MCF 10A (cell line): ENCODE measurements at regions of chr13 and their contacts with region 1.

Region 1: DNA sequence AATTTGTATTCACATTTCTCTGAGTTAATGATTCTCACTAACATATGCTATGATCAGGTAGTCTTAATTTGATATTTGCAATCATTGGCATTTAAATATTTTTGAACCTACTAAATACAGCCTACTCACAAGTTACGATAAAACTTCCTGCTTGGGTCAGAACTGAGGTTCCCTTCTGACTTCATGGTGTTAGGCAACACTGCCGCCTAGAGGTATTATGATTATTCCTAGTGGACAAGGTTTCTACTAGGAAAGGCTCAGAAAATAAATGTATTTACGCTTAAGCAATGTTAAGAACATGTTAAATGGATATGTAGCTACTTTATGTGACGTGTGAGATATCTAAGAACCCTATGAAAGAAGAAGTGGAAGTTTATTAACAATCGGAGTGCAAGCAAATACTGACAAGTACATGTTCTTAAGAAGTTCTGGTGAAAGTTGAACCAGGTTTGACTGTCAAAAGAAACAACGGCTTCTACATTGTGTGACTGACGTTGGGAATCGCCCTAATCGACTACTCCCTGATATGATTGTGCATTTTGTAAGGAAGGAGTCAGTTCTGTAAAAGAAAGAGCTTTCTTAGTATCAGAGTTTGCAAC is 1395.8 kb downstream of the SLITRK5 start:
- DNase-seq: peak; percentile 79
- H3K4me3 Mint-ChIP-seq: no peak overlapping the region
- H3K27ac Mint-ChIP-seq: no peak overlapping the region
- H3K4me1 Mint-ChIP-seq: peaks cover 6% of the 10 kb centered on the region
- H3K27me3 Mint-ChIP-seq: no peaks in the 10 kb centered on the region
- CTCF ChIP-seq: peak; percentile 60

Region 2: DNA sequence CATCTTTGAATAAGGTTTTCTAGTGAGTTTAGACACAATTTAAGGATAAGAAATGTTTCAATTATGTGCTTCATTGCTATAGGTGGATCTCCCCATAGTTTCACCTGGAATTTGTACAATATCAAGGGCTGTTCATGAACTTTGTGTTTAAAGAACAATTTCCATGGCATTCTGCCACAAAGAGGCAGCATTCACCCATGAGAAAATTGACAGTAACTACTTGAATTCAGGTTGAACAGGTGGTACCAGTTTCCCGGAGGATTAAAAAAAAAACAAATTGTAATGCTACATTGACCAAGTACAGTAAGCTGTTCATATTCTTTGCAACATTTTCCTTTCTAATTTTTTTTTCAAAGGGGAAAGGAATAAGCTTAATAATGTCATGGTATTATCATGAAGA is 1386.7 kb before region 1 on chr13:
- CTCF ChIA-PET with region 1: interaction called, 6 read pairs
- POLR2A ChIA-PET with region 1: interaction called, 3 read pairs
- intact Hi-C with region 1: loop called (anchors 1 kb)
- DNase-seq: peak; percentile 63
- H3K4me3 Mint-ChIP-seq: no peak overlapping the region
- H3K27ac Mint-ChIP-seq: no peak overlapping the region
- H3K4me1 Mint-ChIP-seq: peaks cover 15% of the 10 kb centered on the region
- H3K27me3 Mint-ChIP-seq: no peaks in the 10 kb centered on the region
- CTCF ChIP-seq: peak; percentile 32

Region 3: DNA sequence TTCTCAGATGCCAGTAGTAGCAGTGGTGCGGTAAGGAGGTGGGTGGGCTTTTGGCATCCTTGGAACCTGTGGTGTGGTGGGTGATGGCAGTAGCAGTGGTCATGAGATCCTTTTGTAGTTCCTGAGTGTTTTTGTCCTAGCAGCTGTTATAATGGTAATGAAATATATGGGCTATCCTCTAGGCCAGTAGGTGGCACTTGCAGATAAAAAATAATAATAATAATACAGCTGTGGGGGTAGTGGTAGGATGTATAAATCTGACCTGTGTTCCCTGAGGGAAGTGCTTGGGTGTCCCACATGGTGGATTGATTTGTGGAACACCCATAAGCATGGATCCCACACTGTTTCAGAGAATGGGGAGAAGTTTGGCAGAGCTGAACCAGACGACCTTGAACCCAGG is 1061.8 kb before region 1 on chr13:
- CTCF ChIA-PET with region 1: interaction called, 3 read pairs
- POLR2A ChIA-PET with region 1: interaction called, 3 read pairs
- intact Hi-C with region 1: loop called (anchors 1 kb)
- DNase-seq: peak; percentile 3
- H3K4me3 Mint-ChIP-seq: no peak overlapping the region
- H3K27ac Mint-ChIP-seq: no peak overlapping the region
- H3K4me1 Mint-ChIP-seq: no peaks in the 10 kb centered on the region
- H3K27me3 Mint-ChIP-seq: no peaks in the 10 kb centered on the region
- CTCF ChIP-seq: peak; percentile 41

Region 4: GRCh38 chr13:88883741-88884140 is 183.2 kb before region 1 on chr13:
- CTCF ChIA-PET with region 1: no interaction called
- POLR2A ChIA-PET with region 1: no interaction called
- intact Hi-C with region 1: no loop called
- DNase-seq: no peak
- H3K4me3 Mint-ChIP-seq: no peak overlapping the region
- H3K27ac Mint-ChIP-seq: no peak overlapping the region
- H3K4me1 Mint-ChIP-seq: no peaks in the 10 kb centered on the region
- H3K27me3 Mint-ChIP-seq: no peaks in the 10 kb centered on the region
- CTCF ChIP-seq: no peak

Region 5: GRCh38 chr13:89925107-89925506 is 858.1 kb after region 1 on chr13:
- CTCF ChIA-PET with region 1: no interaction called
- POLR2A ChIA-PET with region 1: no interaction called
- intact Hi-C with region 1: loop called (anchors 10 kb)
- DNase-seq: peak; percentile 61
- H3K4me3 Mint-ChIP-seq: no peak overlapping the region
- H3K27ac Mint-ChIP-seq: no peak overlapping the region
- H3K4me1 Mint-ChIP-seq: peaks cover 8% of the 10 kb centered on the region
- H3K27me3 Mint-ChIP-seq: no peaks in the 10 kb centered on the region
- CTCF ChIP-seq: peak; percentile 44